ENCODE measurements at regions of chr12 and their contacts with region 1.

Region 1: GRCh38 chr12:10212201-10213131 is at the start of gene GABARAPL1:
- DNase-seq: peak; percentile 93
- ATAC-seq: peak; percentile 86
- H3K4me3 Mint-ChIP-seq: peak within 1 kb of the TSS; percentile 82
- H3K27ac Mint-ChIP-seq: peak within 1 kb of the TSS; percentile 87
- H3K4me1 Mint-ChIP-seq: peaks cover 29% of the 10 kb centered on the region
- H3K27me3 Mint-ChIP-seq: no peaks in the 10 kb centered on the region
- total RNA-seq, gene GABARAPL1: 2.3 to 2.9 TPM

Region 2: GRCh38 chr12:9647825-9648700 is 564.4 kb before region 1 on chr12:
- CTCF ChIA-PET with region 1: no interaction called
- POLR2A ChIA-PET with region 1: no interaction called
- intact Hi-C with region 1: loop called in 1 of 2 experiments (anchors 1 kb)
- DNase-seq: peak; percentile 96
- ATAC-seq: peak; percentile 72
- H3K4me3 Mint-ChIP-seq: peak overlapping the region; percentile 100
- H3K27ac Mint-ChIP-seq: peak overlapping the region; percentile 100
- H3K4me1 Mint-ChIP-seq: peaks cover 58% of the 10 kb centered on the region
- H3K27me3 Mint-ChIP-seq: no peaks in the 10 kb centered on the region

Region 3: DNA sequence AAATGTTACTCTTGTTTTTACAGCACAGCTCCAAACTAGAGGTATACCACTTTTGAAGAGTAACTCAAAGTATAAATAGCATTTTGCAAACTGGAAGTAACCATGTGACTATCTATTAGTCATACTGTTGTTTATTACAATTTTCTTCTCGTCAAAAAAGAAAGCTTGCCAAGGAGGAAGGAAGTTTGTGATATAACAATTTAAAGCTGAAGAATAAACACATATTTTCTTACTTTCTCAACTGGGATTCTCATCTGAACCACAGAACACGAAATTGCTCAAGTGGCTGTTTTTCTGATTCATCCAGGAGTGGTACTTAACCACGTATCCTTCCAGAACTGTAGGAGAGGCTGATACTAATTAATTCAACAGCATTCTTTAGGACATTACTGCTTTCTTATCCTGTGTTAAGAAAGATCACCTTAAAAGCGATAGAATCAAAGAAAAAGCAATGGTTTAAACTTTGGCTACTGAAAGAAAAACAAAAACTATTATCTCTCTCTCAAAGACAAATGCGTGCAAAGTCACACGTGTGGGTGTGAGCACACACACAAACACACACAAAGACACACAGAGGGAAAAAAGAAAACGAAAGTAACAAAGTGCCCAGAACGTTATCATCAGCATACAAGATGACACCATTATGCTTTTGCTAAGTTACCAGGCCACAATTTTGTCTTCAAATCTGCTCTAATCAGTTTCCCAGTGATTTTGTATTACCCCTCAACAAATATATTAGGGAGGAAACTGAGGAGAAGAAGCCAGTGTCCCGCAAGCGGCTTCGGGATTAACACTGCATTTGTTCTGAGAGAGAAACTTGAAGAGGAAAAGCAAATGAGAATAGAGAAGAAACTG is 342.9 kb before region 1 on chr12 and contains the start of gene CLEC2B:
- CTCF ChIA-PET with region 1: no interaction called
- POLR2A ChIA-PET with region 1: no interaction called
- intact Hi-C with region 1: loop called (anchors 1 to 5 kb)
- DNase-seq: peak; percentile 59
- ATAC-seq: peak; percentile 69
- H3K4me3 Mint-ChIP-seq: peak within 1 kb of the TSS; percentile 77
- H3K27ac Mint-ChIP-seq: peak within 1 kb of the TSS; percentile 95
- H3K4me1 Mint-ChIP-seq: peaks cover 23% of the 10 kb centered on the region
- H3K27me3 Mint-ChIP-seq: no peaks in the 10 kb centered on the region
- total RNA-seq, gene CLEC2B: 21.8 to 25.8 TPM

Region 4: GRCh38 chr12:10153271-10154144 is 59.0 kb before region 1 on chr12:
- CTCF ChIA-PET with region 1: interaction called, 7 read pairs
- POLR2A ChIA-PET with region 1: no interaction called
- intact Hi-C with region 1: loop called in 1 of 2 experiments (anchors 5 kb)
- DNase-seq: peak; percentile 71
- ATAC-seq: peak; percentile 76
- H3K4me3 Mint-ChIP-seq: peak overlapping the region; percentile 78
- H3K27ac Mint-ChIP-seq: peak overlapping the region; percentile 47
- H3K4me1 Mint-ChIP-seq: peaks cover 9% of the 10 kb centered on the region
- H3K27me3 Mint-ChIP-seq: peaks cover 7% of the 10 kb centered on the region

Region 5: DNA sequence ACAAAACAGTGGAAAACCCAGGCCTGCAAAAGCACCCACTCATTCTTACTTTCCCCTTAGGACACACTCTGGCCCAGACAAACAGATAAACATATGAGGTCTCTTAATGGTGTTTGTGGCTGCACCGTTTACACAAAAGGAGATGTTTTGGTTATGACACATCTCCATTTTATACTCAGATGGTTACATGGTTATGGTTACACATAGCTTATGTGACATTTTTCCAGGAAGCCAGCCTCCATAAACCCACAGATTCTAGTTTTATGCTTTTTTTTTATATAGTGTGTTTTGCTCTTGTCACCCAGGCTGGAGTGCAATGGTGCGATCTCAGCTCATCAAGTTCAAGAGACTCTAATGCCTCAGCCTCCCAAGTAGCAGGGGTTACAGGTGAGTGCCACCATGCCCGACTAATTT is 91.7 kb after region 1 on chr12:
- CTCF ChIA-PET with region 1: no interaction called
- POLR2A ChIA-PET with region 1: interaction called, 8 read pairs
- intact Hi-C with region 1: loop called (anchors 1 kb)
- DNase-seq: peak; percentile 64
- ATAC-seq: peak; percentile 86
- H3K4me3 Mint-ChIP-seq: no peak overlapping the region
- H3K27ac Mint-ChIP-seq: peak overlapping the region; percentile 19
- H3K4me1 Mint-ChIP-seq: peaks cover 47% of the 10 kb centered on the region
- H3K27me3 Mint-ChIP-seq: peaks cover 21% of the 10 kb centered on the region

Region 6: GRCh38 chr12:10540776-10541205 is 328.3 kb after region 1 on chr12:
- CTCF ChIA-PET with region 1: no interaction called
- POLR2A ChIA-PET with region 1: no interaction called
- intact Hi-C with region 1: loop called (anchors 1 to 2 kb)
- DNase-seq: no peak
- ATAC-seq: peak; percentile 95
- H3K4me3 Mint-ChIP-seq: no peak overlapping the region
- H3K27ac Mint-ChIP-seq: peak overlapping the region; percentile 26
- H3K4me1 Mint-ChIP-seq: peaks cover 13% of the 10 kb centered on the region
- H3K27me3 Mint-ChIP-seq: peaks cover 42% of the 10 kb centered on the region

Region 7: DNA sequence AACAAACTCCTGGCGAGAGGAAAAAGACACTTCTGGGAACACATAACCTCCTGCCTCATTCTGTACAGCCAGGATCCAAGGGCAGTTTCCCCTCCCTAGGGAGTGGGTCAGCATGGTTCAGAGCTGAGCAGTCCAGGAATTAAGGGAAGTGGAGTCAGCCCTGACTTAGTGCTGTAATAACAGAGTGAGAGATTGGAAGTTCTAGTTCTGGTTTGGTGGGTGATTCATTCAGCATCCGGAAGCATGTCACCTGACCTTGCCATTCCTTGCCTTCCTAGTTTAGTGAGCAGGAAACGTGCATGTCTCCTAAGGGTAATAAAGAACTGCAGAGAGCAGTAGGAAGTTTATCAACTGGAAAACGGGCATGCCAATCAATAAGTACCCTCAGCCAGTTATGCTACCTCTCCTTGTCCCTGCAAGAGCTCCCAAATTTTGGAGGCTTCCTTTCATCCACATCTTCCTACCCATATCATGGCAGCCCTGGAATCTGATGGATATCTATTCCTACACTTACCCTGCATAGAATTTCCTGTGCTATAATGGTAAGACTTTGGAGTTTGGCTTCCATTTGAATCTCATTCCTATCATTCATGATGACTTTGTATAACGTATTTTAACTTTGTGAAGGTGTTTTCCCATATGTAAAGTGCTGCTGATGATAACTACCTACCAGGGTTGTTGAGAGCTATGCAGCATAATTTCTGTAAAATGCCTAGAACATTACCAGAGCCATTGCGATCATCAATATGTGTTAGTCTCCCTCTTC is 429.5 kb after region 1 on chr12:
- CTCF ChIA-PET with region 1: no interaction called
- POLR2A ChIA-PET with region 1: no interaction called
- intact Hi-C with region 1: no loop called
- DNase-seq: no peak
- ATAC-seq: no peak
- H3K4me3 Mint-ChIP-seq: no peak overlapping the region
- H3K27ac Mint-ChIP-seq: no peak overlapping the region
- H3K4me1 Mint-ChIP-seq: no peaks in the 10 kb centered on the region
- H3K27me3 Mint-ChIP-seq: peaks cover 13% of the 10 kb centered on the region

Region 8: DNA sequence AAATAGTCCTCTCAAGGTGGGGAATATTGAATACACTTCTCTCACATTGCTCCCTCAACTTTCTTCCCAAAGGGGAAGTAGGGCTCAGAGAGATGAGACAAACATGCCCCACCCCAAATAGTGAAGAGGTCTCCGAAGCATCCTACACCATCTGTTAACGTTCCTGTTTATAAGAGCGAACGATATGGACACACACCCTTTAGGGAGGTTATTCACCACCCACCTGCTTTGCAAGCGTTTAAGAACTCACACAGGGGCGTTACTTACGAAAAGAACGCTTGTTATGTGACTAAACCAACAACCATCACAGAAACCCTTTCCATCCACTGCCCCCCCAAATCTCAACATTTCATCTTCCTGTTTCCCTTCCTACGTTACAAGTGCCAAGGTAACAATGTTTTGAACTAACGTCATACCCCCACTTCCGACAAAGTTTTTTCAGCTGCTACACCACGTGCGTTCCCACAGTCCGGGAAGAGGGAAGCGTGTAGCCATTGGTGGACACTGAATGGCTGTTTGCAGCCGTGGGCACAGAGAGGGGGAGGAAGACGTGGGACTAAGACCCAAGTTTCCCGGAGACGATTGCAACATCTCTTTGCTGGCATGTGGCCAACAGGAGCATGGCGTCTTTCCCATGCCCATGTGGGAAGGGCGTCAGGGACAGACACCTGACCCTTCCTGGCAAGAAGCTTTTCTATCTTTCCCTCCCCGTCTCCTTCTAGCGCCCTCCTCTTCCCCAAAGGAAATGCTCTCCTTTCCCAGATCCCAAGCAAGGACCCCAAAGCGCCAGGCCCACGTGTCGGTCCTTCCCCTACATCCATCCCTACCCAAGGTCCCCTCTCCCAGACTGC is 509.4 kb after region 1 on chr12:
- CTCF ChIA-PET with region 1: no interaction called
- POLR2A ChIA-PET with region 1: no interaction called
- intact Hi-C with region 1: loop called (anchors 1 to 2 kb)
- DNase-seq: peak; percentile 74
- ATAC-seq: peak; percentile 68
- H3K4me3 Mint-ChIP-seq: peak overlapping the region; percentile 91
- H3K27ac Mint-ChIP-seq: peak overlapping the region; percentile 91
- H3K4me1 Mint-ChIP-seq: peaks cover 25% of the 10 kb centered on the region
- H3K27me3 Mint-ChIP-seq: peaks cover 29% of the 10 kb centered on the region